ENCODE measurements at regions of chr20 and their contacts with region 1.

Region 1: GRCh38 chr20:25237610-25238318 is 10.1 kb upstream of the PYGB start:
- DNase-seq: peak; percentile 42
- H3K4me3 Mint-ChIP-seq: peak overlapping the region; percentile 37
- H3K27ac Mint-ChIP-seq: peak overlapping the region; percentile 86
- H3K4me1 Mint-ChIP-seq: peaks cover 30% of the 10 kb centered on the region
- H3K27me3 Mint-ChIP-seq: peaks cover 7% of the 10 kb centered on the region

Region 2: DNA sequence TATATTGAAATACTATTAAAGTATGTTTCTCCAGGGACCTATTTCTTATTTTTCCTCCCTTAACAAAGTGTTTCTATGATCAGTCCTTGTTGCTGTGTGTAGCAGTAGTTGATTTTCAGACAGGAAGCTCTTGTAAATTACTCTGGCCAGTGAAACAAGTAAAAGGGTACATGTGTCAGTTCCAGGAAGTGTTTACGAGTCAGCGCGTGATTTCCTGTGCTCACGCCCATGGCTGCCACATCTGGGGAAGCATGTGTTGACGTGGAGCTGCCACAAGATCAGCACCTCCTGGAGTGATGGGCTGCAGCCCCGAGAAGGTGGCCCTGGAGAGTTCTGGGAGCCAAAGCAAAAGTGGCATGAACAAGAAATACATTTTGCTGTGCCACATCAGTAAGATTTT is 1210.5 kb before region 1 on chr20:
- intact Hi-C with region 1: loop called (anchors 10 kb)
- DNase-seq: peak; percentile 82
- H3K4me3 Mint-ChIP-seq: peak overlapping the region; percentile 50
- H3K27ac Mint-ChIP-seq: peak overlapping the region; percentile 86
- H3K4me1 Mint-ChIP-seq: peaks cover 56% of the 10 kb centered on the region
- H3K27me3 Mint-ChIP-seq: no peaks in the 10 kb centered on the region

Region 3: DNA sequence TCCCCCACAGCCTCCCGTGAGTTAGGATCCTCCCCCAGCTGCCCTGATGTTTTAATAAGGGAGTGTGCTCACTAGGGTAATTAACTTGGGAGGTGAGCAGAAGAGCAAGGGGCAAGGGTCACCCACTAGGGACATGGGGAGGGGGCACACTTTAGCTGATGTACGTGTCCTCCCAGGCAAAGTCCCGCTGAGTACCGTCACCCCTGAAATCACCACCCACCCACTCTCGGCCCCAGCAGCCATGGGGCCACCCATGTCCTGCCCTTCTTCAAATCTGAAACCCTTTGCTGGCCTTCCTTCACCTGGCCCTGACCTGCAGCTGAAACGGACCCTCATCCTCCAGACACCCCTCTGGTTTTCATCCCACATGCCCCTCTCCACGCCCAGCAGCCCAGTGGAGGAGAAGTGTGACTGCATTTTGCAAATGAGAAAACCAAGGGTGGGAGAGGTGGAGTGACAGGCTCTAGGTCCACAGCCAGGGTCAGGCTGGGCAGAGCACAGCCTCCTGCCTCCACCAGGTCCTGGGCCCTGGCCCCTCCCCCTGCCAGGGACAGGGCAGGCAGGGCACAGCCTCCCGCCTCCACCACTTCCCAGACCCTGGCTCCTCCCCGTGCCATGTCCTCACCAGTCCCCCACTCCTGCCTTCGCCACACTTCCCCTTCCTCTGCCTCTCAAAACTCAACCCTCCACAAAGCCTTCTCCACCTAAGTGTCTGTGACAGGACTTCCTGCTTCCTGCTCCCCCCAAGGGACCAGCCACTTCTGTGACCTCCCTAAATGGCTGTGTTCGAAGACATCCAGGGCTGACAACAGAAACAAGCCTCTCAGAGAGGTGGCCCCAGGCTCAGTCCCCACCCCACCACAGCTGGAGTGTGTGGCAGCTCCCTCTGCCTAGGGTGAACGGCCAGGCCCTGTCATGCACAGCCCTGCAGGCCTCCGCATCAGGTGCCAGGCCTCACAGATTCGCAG is 194.9 kb before region 1 on chr20:
- intact Hi-C with region 1: no loop called
- DNase-seq: peak; percentile 6
- H3K4me3 Mint-ChIP-seq: no peak overlapping the region
- H3K27ac Mint-ChIP-seq: no peak overlapping the region
- H3K4me1 Mint-ChIP-seq: peaks cover 14% of the 10 kb centered on the region
- H3K27me3 Mint-ChIP-seq: no peaks in the 10 kb centered on the region

Region 4: DNA sequence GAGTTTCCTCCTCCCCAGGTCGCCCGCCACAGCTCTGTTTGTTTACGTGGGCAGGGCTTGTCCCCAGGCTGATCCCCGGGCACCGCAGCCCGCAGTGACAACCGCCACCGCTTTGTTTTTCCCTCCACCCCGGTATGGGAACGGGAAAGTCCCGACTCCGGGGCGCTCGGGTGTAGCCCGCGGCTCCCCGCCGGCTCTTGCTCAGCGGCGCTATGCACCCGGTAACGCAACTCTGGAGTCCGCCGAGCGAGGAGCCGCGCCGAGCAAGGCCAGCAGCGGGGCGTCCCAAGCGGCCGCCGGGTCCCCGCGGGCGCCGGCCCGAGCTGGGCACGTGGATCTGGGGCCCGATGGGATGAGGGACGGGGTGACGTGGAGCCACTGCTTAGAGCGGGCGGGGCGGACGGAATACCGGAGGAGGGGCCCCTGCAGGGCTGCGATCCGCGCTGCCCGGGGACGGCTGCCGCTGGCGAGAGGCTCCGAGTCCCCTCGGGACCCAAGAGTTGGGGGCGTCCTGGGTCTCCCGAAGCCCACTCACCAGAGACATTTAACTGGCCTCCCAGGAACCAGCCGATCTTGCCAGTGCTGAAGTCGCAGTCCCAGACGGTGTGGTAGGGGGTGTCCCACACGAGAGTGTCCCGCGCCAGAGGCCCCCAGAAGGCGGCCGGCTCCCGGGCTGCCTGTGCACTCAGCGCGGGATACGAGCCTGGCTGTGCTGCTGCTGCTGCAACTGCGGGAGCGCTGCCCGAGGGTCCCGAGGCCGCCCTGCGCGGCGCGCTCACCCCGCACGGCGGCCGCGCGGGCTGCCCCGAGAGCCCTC is 180.3 kb before region 1 on chr20:
- intact Hi-C with region 1: loop called (anchors 2 kb)
- DNase-seq: peak; percentile 83
- H3K4me3 Mint-ChIP-seq: peak overlapping the region; percentile 78
- H3K27ac Mint-ChIP-seq: peak overlapping the region; percentile 84
- H3K4me1 Mint-ChIP-seq: peaks cover 33% of the 10 kb centered on the region
- H3K27me3 Mint-ChIP-seq: peaks cover 47% of the 10 kb centered on the region

Region 5: DNA sequence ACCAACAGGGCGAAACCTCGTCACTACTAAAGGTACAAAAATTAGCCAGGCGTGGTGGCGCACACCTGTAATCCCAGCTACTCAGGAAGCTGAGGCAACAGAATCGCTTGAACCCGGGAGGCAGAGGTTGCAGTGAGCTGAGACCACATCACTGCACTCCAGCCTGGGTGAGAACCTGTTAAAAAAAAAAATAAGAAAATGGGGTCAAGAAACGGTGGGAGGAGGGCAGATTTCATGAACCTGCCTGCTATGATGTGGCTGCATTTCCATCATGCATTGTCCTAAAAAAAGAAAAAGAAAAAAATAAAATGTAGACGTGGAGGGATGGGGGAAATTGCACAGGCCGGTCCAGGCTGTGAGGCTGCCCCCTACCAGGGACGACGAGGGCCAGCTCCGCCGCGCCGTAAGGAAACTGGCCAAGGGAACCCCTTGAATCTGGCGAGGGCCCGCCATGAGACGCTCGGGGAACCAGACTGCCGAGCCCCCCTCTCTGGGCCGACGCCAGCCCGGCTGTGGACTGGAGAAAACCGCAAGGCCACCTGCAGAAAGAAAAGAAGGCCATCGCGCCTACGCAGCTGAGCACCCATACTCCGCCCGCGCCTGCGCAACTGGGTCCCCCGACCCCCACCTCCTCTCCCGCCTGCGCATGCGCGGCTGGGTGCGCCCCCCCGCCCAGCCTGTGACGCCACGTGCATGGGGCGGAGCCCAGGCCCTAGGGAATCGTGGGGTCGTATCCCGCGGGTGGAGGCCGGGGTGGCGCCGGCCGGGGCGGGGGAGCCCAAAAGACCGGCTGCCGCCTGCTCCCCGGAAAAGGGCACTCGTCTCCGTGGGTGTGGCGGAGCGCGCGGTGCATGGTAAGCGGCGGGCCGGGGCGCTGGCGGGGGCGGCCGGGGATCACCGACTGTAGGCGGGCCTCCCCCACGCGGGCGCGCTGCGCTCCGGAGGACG is 42.5 kb before region 1 on chr20 and contains the start of gene ENTPD6:
- intact Hi-C with region 1: loop called (anchors 1 kb)
- DNase-seq: peak; percentile 89
- H3K4me3 Mint-ChIP-seq: peak within 1 kb of the TSS; percentile 91
- H3K27ac Mint-ChIP-seq: peak within 1 kb of the TSS; percentile 81
- H3K4me1 Mint-ChIP-seq: peaks cover 20% of the 10 kb centered on the region
- H3K27me3 Mint-ChIP-seq: no peaks in the 10 kb centered on the region
- total RNA-seq, gene ENTPD6: 42.5 and 43.5 TPM in 2 replicates

Region 6: GRCh38 chr20:25247956-25248785 is 10.4 kb after region 1 on chr20 and contains the start of gene PYGB:
- intact Hi-C with region 1: loop called (anchors 1 kb)
- DNase-seq: peak; percentile 69
- H3K4me3 Mint-ChIP-seq: peak within 1 kb of the TSS; percentile 92
- H3K27ac Mint-ChIP-seq: peak within 1 kb of the TSS; percentile 87
- H3K4me1 Mint-ChIP-seq: peaks cover 43% of the 10 kb centered on the region
- H3K27me3 Mint-ChIP-seq: no peaks in the 10 kb centered on the region
- total RNA-seq, gene PYGB: 36.8 and 38.5 TPM in 2 replicates

Region 7: DNA sequence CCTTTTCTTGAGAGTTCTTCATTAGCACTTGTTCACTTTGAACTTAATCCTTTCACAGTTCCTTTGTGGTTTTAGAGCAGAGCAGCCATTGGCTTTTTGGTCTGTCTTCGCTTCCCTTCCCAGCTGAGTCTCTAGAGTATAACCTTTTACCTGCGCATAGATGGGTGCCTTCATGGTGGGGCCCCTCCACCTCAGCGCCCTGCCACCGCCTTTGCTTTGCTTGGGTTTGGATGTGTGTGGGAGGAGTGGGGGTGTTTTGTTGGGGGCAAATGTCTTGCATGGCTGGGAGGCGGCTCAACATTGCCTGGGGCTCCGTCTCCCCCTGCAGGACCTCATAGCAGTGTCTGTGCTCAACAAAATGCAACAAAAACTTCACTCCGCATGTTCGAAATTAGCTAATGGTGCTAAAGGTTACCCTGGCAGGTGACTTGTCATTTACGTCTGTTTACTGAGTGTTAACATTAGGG is 22.1 kb after region 1 on chr20:
- intact Hi-C with region 1: no loop called
- DNase-seq: no peak
- H3K4me3 Mint-ChIP-seq: no peak overlapping the region
- H3K27ac Mint-ChIP-seq: peak overlapping the region; percentile 15
- H3K4me1 Mint-ChIP-seq: peaks cover 22% of the 10 kb centered on the region
- H3K27me3 Mint-ChIP-seq: no peaks in the 10 kb centered on the region

Region 8: DNA sequence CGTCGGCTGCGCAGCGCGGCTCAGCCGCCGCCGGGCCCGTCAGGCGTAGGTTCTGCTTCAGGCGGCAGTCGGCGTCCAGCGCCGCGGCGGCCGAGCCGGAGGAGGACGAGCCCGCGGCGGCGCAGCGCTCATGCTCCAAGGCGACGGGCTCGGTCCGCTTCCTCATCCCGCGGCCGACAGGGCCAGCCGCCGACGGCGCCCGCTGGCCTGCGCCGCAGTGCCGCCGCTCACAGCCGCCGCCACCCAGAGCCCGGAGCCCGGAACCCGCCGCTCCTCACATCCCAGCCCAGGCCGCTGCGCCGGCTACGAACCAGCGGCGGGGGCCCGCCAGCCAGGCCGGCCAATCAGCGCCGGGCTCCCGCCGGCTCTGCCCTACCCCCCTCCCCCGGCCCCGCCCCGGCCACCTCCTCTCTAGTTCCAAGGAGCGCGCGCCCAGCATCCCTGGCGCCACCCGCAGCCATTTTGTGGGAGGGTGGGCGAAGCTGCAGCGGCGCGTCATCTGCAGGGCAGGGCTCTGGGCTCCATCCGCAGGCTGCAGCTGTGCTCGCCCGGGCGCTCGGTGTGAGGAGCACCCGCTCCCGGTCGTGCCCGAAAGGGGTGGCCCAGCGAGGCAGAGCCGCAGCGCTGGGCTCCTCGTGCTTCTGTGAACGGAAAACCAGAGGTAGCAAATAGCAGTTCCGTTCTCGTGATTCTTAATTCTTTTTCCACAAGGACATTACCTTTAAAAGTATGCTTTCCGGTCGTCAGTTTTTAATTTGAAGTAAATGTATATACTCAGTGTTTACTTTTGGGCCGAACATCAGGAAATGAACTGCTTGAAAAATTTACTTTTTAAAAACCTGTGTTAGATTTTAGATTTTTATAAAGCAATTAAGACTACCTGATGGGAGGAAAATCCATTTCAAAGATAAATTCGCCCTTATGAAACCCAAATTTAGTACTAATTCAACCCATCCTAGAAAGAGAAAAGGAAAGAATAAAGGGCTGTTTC is 153.1 kb after region 1 on chr20 and contains the start of gene ABHD12:
- intact Hi-C with region 1: loop called (anchors 1 kb)
- DNase-seq: peak; percentile 93
- H3K4me3 Mint-ChIP-seq: peak within 1 kb of the TSS; percentile 90
- H3K27ac Mint-ChIP-seq: peak within 1 kb of the TSS; percentile 88
- H3K4me1 Mint-ChIP-seq: peaks cover 18% of the 10 kb centered on the region
- H3K27me3 Mint-ChIP-seq: peaks cover 6% of the 10 kb centered on the region
- total RNA-seq, gene ABHD12: 37.0 and 37.6 TPM in 2 replicates

Measured in activated T-helper 1 cell treated with anti-CD3 and anti-CD28 coated beads, Interleukin-12 subunit alpha, Interleukin-12 subunit beta, Interleukin-2, Interleukin-4 antibody, amounts not matched to agents 30 ng/mL and 10 ng/mL and 1 ng/mL, durations not matched to agents 14 hours and 24 hours and 36 hours (primary cell).